K562 (cell line): ENCODE measurements at regions of chr19 and their contacts with region 1.

Region 1: DNA sequence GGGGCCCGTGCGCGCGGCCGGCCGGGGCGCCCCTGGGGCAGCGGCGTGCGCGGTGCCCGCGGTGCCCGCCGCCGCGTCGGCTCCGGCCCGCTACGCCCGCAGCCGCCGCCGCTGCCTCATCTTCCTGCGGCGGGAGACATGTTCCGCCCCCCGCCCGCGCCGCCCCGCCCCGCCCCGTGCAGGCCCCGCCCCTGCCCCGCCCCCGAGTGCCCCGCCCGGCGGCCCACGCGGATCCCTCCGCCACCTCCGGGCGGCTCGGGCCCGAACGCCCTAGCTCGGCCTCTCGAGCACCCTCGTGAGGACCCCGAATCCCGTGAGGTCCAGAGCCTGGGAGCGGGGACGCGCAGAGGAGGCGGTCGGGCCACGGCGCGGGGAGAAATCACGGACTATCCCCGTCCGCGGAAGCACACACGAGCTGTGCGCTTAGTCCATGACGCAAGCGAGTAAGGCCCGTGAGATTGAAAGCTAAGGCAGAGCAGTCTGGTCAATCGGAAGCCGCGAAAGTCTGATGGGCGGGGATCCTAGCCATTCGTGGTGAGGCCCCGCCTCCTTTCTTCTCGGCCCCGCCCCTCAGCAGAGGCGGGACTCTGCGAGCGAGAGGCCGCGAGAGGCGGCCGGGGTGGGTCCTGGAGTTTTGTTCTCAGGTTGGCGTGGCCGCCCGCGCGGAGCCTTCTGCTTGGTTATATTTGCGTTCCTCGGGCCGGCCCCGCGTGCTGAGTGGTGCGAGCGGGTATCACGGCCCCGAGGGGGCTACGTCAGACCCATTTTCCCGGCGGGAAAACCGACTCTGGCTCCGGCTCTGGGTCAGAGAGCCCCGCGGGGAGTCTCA is at the start of gene TCF3:
- DNase-seq: peak; percentile 92 to 99 (median 96)
- ATAC-seq: peak; percentile 93
- H3K4me3 ChIP-seq: peak within 1 kb of the TSS; percentile 79
- H3K27ac ChIP-seq: peak within 1 kb of the TSS; percentile 100
- H3K4me1 ChIP-seq: peaks cover 12 to 72% of the 10 kb centered on the region in 2 experiments
- H3K27me3 ChIP-seq: no peaks in the 10 kb centered on the region
- CTCF ChIP-seq: no peak
- EP300 ChIP-seq: peak; percentile 30
- POLR2A ChIP-seq: peak; percentile 77
- RAD21 ChIP-seq: peak; percentile 10 to 33; a peak in 2 of 4 replicates
- polyA plus RNA-seq, gene TCF3: 5.6 to 5.7 TPM

Region 2: GRCh38 chr19:1551068-1552040 is 101.3 kb before region 1 on chr19:
- CTCF ChIA-PET with region 1: no interaction called
- POLR2A ChIA-PET with region 1: no interaction called
- in situ Hi-C with region 1: loop called (anchors 5 kb)
- intact Hi-C with region 1: no loop called
- DNase-seq: no peak
- ATAC-seq: no peak
- H3K4me3 ChIP-seq: no peak overlapping the region
- H3K27ac ChIP-seq: no peak overlapping the region
- H3K4me1 ChIP-seq: peaks cover 3 to 29% of the 10 kb centered on the region in 2 experiments; a peak in 3 of 5 replicates
- H3K27me3 ChIP-seq: no peaks in the 10 kb centered on the region; a peak in 1 of 5 replicates
- CTCF ChIP-seq: no peak
- EP300 ChIP-seq: no peak
- POLR2A ChIP-seq: no peak
- RAD21 ChIP-seq: no peak

Region 3: DNA sequence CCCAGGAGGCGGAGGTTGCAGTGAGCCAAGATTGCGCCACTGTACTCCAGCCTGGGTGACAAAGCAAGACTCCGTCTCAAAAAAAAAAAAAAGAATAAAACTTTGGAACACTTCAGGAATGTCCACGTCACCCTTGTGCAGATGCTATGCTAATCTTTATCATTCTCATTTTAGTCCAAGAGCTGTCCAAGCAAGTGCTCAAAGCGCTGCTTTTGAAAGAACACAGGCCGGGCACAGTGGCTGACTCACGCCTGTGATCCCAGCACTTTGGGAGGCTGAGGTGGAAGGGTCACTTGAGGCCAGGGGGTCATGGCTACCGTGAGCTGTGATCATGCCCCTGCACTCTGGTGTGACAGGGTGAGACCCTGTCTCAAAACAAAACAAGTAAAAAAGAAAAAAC is 36.3 kb before region 1 on chr19:
- CTCF ChIA-PET with region 1: no interaction called
- POLR2A ChIA-PET with region 1: no interaction called
- in situ Hi-C with region 1: no loop called
- intact Hi-C with region 1: no loop called
- DNase-seq: no peak
- ATAC-seq: no peak
- H3K4me3 ChIP-seq: no peak overlapping the region
- H3K27ac ChIP-seq: no peak overlapping the region
- H3K4me1 ChIP-seq: peaks cover 0 to 57% of the 10 kb centered on the region in 2 experiments; a peak in 2 of 5 replicates
- H3K27me3 ChIP-seq: no peaks in the 10 kb centered on the region
- CTCF ChIP-seq: no peak
- EP300 ChIP-seq: no peak
- POLR2A ChIP-seq: no peak
- RAD21 ChIP-seq: no peak

Region 4: DNA sequence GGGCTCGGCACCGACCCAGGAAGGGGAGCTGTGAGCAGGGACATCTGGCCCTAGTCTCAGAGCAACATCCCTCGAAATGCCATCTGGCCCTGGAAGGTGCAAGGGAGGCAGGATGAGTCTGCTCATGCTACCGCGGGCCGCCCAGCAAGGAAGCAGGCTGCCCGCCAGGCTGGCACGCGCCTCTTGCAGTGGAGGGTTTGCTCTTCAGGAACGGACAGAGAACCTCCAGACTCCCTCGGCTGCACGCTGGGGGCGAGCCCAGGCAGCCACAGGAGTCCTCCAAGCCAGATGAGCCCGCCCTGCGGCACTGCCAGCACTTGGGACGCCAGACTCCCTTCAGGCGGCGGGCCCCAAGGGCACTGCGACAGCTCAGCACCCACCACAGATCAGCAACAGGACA is 169.5 kb after region 1 on chr19:
- CTCF ChIA-PET with region 1: no interaction called
- POLR2A ChIA-PET with region 1: no interaction called
- in situ Hi-C with region 1: no loop called
- intact Hi-C with region 1: no loop called
- DNase-seq: no peak
- ATAC-seq: no peak
- H3K4me3 ChIP-seq: no peak overlapping the region
- H3K27ac ChIP-seq: no peak overlapping the region
- H3K4me1 ChIP-seq: peaks cover 11 to 45% of the 10 kb centered on the region in 2 experiments
- H3K27me3 ChIP-seq: no peaks in the 10 kb centered on the region
- CTCF ChIP-seq: no peak
- EP300 ChIP-seq: no peak
- POLR2A ChIP-seq: no peak
- RAD21 ChIP-seq: no peak